ENCODE measurements at regions of chr14 and their contacts with region 1.

Region 1: DNA sequence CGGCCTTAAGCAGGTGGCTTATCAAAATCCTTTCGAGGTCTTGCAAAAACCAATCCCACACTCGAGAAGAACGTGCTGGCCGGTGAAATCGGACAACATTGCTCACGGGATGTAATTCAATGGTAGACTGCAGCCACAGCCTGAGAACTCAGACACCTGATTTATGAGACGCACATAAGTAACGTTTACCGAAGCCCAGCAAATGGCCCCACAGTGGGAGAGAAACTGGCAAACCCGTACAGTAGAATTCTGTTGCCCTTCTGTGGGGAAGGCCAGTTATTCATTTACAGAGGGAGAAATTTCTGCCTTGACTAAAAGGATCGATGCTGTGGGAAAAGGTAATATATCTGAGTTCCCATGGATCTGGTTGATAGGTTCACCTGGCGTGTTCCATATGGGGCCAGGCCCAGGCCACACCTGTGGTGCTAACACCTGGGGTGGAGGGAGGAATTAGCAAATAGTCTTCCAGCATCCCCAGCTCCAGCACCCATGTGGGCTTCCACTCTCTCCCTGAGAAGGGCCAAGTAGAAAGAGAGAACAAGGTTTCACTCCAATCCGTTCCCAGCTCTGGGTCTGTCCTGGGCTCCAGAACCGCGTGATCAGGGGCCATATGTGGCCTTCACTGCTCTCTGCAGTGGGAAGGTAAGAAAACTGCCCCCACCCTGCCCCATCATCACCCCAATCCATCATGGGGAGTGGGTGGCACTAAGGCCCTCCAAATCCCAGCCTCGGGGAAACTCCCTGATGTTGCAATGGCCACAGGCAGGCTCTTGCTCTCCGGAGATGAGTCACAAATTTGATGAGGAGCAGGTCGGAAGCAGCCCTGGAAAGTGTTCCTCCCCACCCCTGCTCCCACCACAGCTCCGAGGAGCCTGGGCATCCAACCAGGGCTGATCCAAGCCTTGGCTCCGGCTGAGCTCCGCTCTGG is 12.7 kb downstream of the BDKRB1 start:
- DNase-seq: no peak
- ATAC-seq: no peak
- H3K4me3 ChIP-seq: no peak overlapping the region
- H3K27ac ChIP-seq: no peak overlapping the region
- H3K4me1 ChIP-seq: peaks cover 0 to 4% of the 10 kb centered on the region in 2 experiments; a peak in 2 of 5 replicates
- H3K27me3 ChIP-seq: peaks cover 3 to 41% of the 10 kb centered on the region in 2 experiments; a peak in 4 of 5 replicates
- CTCF ChIP-seq: no peak
- EP300 ChIP-seq: no peak
- POLR2A ChIP-seq: no peak
- RAD21 ChIP-seq: no peak

Region 2: GRCh38 chr14:96117100-96117897 is 151.4 kb before region 1 on chr14:
- CTCF ChIA-PET with region 1: no interaction called
- POLR2A ChIA-PET with region 1: no interaction called
- in situ Hi-C with region 1: loop called (anchors 10 kb)
- intact Hi-C with region 1: no loop called
- DNase-seq: no peak
- ATAC-seq: no peak
- H3K4me3 ChIP-seq: no peak overlapping the region
- H3K27ac ChIP-seq: no peak overlapping the region
- H3K4me1 ChIP-seq: no peaks in the 10 kb centered on the region
- H3K27me3 ChIP-seq: no peaks in the 10 kb centered on the region; a peak in 1 of 5 replicates
- CTCF ChIP-seq: no peak
- EP300 ChIP-seq: no peak
- POLR2A ChIP-seq: no peak
- RAD21 ChIP-seq: no peak